ENCODE measurements at regions of chr11 and their contacts with region 1.

Region 1: DNA sequence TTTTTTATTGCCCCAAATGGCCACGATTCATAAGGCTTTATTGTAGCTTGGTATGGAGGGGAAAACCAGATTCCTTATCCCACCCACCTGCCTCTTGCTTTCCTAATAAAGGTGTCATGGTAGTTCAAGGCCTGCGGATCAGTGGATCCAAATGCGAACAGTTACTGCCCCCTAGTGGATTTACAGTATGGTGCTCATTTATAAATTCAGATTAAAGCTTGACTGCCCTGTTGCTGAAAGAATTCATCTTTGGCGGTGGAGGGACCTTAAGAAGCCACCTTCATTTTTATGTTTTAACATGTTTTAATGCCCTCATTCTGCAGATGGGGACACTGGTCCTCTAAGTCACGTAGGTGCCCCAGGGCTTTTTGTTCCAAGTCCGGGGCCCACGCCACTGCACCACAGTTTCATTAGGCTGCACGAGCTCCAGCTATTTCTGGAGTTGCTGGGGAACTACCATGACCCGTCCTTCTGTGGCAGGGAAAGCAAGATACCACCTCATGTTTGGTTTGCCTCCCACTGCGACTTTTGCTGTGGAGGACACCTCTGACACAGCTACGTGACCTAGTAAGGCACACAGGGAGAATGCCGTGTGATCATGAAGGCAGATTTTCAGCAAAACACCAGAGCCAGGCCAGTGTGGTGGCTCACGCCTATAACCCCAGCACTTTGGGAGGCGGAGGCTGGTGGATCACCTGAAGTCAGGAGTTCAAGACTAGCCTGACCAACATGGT is 15.6 kb upstream of the INCENP start:
- DNase-seq: peak in 1 of 5 donors; percentile 47
- H3K4me3 ChIP-seq: no peak overlapping the region
- H3K27ac ChIP-seq: no peak overlapping the region
- H3K4me1 ChIP-seq: peaks cover 10% of the 10 kb centered on the region
- H3K27me3 ChIP-seq: no peaks in the 10 kb centered on the region
- CTCF ChIP-seq: peak; percentile 80 to 86 (median 85)
- EP300 ChIP-seq: no peak
- POLR2A ChIP-seq: no peak

Region 2: DNA sequence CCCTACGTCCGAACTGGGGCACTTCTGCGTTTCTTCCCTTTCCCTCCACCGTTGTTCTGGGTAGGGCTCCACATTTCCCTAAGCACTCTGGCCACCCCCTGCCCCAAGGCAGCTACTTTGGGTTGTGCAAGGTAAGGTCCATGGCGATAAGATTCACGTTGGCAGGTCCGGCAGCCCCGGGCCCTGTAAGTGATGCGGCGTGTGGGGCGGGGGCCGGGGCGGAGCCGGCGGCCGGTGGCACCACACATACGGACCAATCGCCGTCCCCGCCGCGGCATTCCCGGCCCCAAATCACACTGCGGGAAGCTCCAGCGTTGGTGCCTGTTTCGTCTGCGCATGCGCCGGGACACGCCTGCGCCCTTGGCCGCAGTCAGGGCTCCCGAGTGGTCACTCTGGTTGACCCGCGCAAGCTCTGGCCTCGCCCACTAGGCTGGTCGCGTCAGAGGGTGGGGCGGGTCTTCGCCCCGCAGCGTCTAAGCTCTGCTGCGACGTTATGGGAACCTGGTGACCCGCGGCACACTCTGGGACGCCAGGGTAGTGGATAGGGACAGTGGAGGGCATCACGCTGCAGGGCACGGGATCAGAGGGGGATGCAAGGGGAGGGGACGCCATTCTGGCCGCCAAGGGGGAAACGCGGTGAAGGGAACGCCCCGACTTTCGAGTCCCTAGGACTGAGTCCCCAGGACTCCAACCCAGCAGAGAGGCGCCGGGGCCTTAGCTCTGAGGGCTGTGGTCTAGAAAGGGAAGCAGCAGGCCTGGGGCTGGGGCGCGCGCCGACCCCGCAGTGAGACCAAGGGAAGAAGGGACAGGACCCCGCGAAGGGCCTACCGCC is 293.0 kb before region 1 on chr11:
- intact Hi-C with region 1: loop called in 1 of 4 experiments (anchors 5 kb)
- DNase-seq: peak; percentile 97 to 98 (median 97)
- H3K4me3 ChIP-seq: peak overlapping the region; percentile 73
- H3K27ac ChIP-seq: peak overlapping the region; percentile 95 to 98
- H3K4me1 ChIP-seq: no peaks in the 10 kb centered on the region
- H3K27me3 ChIP-seq: no peaks in the 10 kb centered on the region
- CTCF ChIP-seq: peak in 1 of 3 donors; percentile 21
- EP300 ChIP-seq: peak; percentile 25
- POLR2A ChIP-seq: peak; percentile 99

Region 3: DNA sequence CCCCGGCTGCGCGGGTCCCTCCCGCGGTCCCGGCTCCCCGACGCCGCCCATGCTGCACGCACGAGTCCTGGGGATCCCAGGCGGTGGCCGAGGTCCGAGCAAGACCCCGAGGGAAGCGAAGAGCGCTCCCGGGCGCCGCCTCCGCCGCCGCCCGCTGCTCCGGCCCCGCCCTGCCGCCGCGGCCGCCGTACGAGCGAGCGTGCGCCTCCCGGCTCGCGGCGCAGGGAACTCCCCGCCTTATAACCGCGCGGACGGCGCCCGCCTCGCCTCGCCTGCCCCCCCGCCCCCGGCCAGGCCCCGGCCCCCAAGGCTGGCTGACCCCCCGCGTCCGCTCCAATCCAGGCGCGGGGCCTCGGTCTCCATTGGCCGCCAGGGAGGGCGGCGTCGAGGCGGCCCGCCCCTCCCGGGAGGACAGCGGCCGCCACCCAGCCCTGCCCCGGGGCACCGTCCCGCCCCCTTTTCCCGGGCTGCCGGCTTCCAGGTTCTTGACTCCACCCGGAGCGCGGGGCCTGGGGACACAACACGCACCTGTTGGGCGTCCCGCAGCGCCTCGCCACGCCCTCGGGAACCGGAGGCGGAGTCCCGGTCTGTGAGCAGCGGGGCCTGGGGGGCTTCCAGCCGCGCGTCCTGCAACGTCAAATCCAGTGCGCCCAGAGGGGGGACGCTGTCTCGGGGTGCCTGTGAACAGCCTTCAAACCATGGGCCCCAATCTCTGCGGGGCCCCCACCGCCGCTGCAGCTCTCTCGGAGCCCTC is 216.7 kb before region 1 on chr11 and contains the start of gene FADS3:
- intact Hi-C with region 1: loop called in 3 of 4 experiments (anchors 2 to 5 kb)
- DNase-seq: peak; percentile 84 to 88 (median 87)
- H3K4me3 ChIP-seq: peak within 1 kb of the TSS; percentile 75
- H3K27ac ChIP-seq: peak within 1 kb of the TSS; percentile 83
- H3K4me1 ChIP-seq: peaks cover 5% of the 10 kb centered on the region
- H3K27me3 ChIP-seq: no peaks in the 10 kb centered on the region
- CTCF ChIP-seq: no peak
- EP300 ChIP-seq: no peak
- POLR2A ChIP-seq: peak; percentile 36
- total RNA-seq, gene FADS3: 21.9 to 85.8 (median 41.3) TPM

Region 4: GRCh38 chr11:62025487-62026105 is 82.6 kb before region 1 on chr11:
- intact Hi-C with region 1: no loop called
- DNase-seq: peak in 4 of 5 donors; percentile 27 to 65 (median 28)
- H3K4me3 ChIP-seq: no peak overlapping the region
- H3K27ac ChIP-seq: no peak overlapping the region
- H3K4me1 ChIP-seq: no peaks in the 10 kb centered on the region
- H3K27me3 ChIP-seq: no peaks in the 10 kb centered on the region
- CTCF ChIP-seq: no peak
- EP300 ChIP-seq: peak; percentile 52
- POLR2A ChIP-seq: no peak

Region 5: GRCh38 chr11:63879598-63880402 is 1771.6 kb after region 1 on chr11:
- intact Hi-C with region 1: loop called in 1 of 4 experiments (anchors 5 kb)
- DNase-seq: no peak
- H3K4me3 ChIP-seq: no peak overlapping the region
- H3K27ac ChIP-seq: no peak overlapping the region
- H3K4me1 ChIP-seq: peaks cover 15% of the 10 kb centered on the region
- H3K27me3 ChIP-seq: no peaks in the 10 kb centered on the region
- CTCF ChIP-seq: no peak
- EP300 ChIP-seq: no peak
- POLR2A ChIP-seq: no peak

Measured in ovary (tissue), 10 donors.